Posterior cingulate gyrus (tissue), 11 donors: ENCODE measurements at regions of chr17 and their contacts with region 1.

Region 1: DNA sequence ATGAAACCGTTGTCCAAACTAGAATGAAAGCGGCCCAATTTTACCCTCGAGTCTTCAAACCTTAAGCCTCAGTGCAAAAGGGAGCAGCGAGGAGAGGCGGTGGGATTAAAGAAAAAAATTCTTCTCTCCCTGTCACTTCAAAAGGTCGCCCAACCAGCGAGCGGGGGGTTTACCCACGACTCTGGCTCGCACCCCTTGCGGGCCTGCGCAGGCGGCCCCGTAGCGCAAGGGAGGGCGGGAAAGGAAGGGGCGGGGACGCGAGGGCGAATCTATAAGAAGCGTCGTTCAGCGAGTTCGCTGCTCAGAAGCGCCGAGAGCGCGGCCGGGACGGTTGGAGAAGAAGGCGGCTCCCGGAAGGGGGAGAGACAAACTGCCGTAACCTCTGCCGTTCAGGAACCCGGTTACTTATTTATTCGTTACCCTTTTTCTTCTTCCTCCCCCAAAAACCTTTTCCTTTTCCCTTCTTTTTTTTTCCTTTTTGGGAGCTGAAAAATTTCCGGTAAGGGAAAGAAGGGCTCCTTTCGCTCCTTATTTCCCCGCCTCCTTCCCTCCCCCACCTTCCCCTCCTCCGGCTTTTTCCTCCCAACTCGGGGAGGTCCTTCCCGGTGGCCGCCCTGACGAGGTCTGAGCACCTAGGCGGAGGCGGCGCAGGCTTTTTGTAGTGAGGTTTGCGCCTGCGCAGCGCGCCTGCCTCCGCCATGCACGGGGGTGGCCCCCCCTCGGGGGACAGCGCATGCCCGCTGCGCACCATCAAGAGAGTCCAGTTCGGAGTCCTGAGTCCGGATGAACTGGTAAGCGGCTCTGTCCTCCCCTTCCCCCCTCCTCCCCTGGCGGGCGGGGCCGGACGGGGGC is at the start of gene POLR2A:
- DNase-seq: peak; percentile 96 to 99 (median 98)

Region 2: GRCh38 chr17:7403977-7404736 is 80.1 kb before region 1 on chr17 and contains the start of gene TMEM256:
- intact Hi-C with region 1: loop called (anchors 2 kb)
- DNase-seq: peak; percentile 99 to 100 (median 100)

Region 3: GRCh38 chr17:7435221-7435675 is 49.0 kb before region 1 on chr17 and contains the start of gene TMEM102:
- intact Hi-C with region 1: loop called (anchors 1 kb)
- DNase-seq: peak; percentile 77 to 98 (median 84)

Region 4: DNA sequence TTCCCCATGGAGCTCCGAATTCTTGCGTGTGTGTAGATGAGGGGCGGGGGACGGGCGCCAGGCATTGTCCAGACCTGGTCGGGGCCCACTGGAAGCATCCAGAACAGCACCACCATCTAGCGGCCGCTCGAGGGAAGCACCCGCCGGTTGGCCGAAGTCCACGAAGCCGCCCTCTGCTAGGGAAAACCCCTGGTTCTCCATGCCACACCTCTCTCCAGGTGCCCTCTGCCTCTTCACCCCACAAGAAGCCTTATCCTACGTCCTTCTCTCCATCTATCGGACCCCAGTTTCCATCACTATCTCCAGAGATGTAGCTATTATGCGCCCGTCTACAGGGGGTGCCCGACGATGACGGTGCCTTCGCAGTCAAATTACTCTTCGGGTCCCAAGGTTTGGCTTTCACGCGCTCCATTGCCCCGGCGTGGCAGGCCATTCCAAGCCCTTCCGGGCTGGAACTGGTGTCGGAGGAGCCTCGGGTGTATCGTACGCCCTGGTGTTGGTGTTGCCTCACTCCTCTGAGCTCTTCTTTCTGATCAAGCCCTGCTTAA is 76.8 kb after region 1 on chr17:
- intact Hi-C with region 1: loop called (anchors 1 kb)
- DNase-seq: peak; percentile 77 to 98 (median 90)